ENCODE measurements at regions of chr20 and their contacts with region 1.

Region 1: GRCh38 chr20:41029149-41029923 is 714 bp downstream of the TOP1 start:
- DNase-seq: peak in 8 of 10 donors; percentile 11 to 54 (median 35)
- ATAC-seq: peak in 1 of 2 donors; percentile 14
- H3K4me3 Mint-ChIP-seq: peak overlapping the region; percentile 89 to 97 (median 94)
- H3K27ac Mint-ChIP-seq: peak overlapping the region; percentile 88 to 97 (median 96)
- H3K4me1 Mint-ChIP-seq: peaks cover 30 to 69% (median 62%) of the 10 kb centered on the region in 4 donors
- H3K27me3 Mint-ChIP-seq: no peaks in the 10 kb centered on the region

Region 2: DNA sequence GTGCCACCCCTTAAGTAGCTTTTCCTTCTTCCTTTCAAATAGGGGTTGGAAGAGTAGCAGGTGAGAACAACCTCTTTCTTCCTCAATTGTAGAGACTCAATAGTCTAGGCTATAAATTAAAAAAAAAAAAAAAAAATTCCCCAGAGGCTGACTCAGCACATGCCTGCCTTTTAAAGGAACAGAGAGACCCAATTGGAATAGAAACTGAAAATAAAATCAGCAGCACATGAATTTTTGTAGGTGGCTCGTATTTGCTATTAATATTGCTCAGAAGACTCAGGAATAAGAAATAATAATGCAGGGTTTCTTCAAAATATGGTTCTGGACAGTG is 18.6 kb after region 1 on chr20:
- POLR2A ChIA-PET with region 1: interaction called, 22 read pairs
- DNase-seq: peak in 2 of 10 donors; percentile 26 to 30
- ATAC-seq: peak; percentile 42 to 48
- H3K4me3 Mint-ChIP-seq: peak overlapping the region; percentile 67 to 86 (median 78)
- H3K27ac Mint-ChIP-seq: peak overlapping the region; percentile 3 to 90 (median 84)
- H3K4me1 Mint-ChIP-seq: peaks cover 47 to 99% (median 92%) of the 10 kb centered on the region in 4 donors
- H3K27me3 Mint-ChIP-seq: no peaks in the 10 kb centered on the region

Measured in naive thymus-derived CD8-positive, alpha-beta T cell (primary cell).